Common myeloid progenitor, CD34-positive (primary cell): ENCODE measurements at regions of chr19 and their contacts with region 1.

Region 1: GRCh38 chr19:4815426-4816201 is 15.9 kb downstream of the TICAM1 start:
- DNase-seq: peak; percentile 81 to 84 (median 83)
- H3K4me3 ChIP-seq: peak overlapping the region; percentile 5 to 81 (median 49)
- H3K27ac ChIP-seq: no peak overlapping the region
- H3K4me1 ChIP-seq: peaks cover 0 to 13% (median 10%) of the 10 kb centered on the region in 4 experiments
- H3K27me3 ChIP-seq: no peaks in the 10 kb centered on the region

Region 2: DNA sequence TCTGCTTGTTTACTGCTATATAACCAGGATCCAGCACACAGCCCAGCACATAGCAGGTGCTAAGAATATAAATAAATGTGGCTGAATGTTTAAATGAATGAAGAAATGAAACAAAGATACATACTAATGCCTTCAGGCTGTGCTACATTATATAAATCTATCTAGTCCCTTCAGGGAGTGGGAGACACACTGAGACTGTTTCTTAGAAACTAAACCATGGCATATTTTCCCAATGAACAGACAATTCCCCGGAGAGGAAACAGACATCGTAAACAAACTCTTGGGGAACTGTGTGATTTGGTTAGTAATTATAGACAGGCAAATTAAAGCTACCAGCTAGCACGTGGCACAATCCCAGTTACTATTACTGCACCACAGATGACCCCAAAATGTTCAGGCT is 33.8 kb before region 1 on chr19:
- CTCF ChIA-PET with region 1: no interaction called
- POLR2A ChIA-PET with region 1: no interaction called
- DNase-seq: no peak
- H3K4me3 ChIP-seq: no peak overlapping the region
- H3K27ac ChIP-seq: no peak overlapping the region
- H3K4me1 ChIP-seq: peaks cover 0 to 3% (median 0%) of the 10 kb centered on the region in 4 experiments
- H3K27me3 ChIP-seq: peaks cover 0 to 24% (median 2%) of the 10 kb centered on the region in 5 experiments

Region 3: DNA sequence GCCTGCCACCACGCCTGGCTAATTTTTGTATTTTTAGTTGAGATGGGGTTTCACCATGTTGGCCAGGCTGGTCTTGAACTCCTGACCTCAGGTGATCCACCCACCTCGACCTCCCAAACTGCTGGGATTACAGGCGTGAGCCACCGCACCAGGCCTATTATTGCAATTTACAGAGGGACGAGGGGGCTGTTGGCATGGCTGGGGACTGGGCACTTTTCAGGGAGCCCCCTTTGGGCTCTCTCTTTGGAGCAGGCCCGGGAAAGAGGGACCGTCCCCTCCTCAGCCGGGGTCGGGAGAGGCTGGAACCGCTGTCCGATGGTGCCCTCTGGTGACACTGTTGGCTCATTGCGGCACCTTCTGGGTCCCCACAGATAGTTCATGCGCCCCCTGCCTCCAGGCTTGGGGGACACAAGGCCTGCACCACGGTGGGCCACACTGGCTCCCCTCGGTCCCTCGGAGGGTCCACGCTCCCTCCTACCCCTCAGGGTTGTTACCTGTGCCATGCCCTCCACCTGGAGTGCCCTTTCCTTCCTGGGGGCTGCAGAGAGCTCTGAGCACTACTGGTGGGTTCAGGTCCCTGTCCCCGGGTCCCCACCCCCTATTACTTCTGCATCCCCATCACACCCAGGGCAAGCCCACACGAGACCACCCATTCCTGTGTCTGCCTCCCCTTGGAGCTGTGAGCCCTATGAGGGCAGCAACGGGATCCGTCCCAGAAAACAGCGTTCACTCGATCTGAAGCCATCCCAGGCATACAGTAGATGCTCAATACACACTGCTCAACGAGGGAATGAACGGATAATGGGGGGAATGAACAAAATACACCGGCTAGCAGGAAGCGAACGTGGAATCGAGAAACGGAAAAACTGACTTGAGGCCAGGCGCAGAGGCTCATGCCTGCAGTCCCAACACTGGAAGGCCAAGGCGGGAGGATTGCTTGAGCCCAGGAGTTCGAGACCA is 11.6 kb before region 1 on chr19:
- CTCF ChIA-PET with region 1: interaction called, 10 read pairs
- POLR2A ChIA-PET with region 1: interaction called, 4 read pairs
- DNase-seq: peak; percentile 76 to 83 (median 79)
- H3K4me3 ChIP-seq: peak overlapping the region in 1 of 7 experiments; percentile 8
- H3K27ac ChIP-seq: no peak overlapping the region
- H3K4me1 ChIP-seq: peaks cover 0 to 20% (median 3%) of the 10 kb centered on the region in 4 experiments
- H3K27me3 ChIP-seq: no peaks in the 10 kb centered on the region

Region 4: GRCh38 chr19:4831304-4831978 is 15.8 kb after region 1 on chr19 and contains the start of gene TICAM1:
- CTCF ChIA-PET with region 1: interaction called, 73 read pairs
- POLR2A ChIA-PET with region 1: interaction called, 4 read pairs
- DNase-seq: peak; percentile 78 to 88 (median 88)
- H3K4me3 ChIP-seq: peak within 1 kb of the TSS; percentile 64 to 96 (median 88)
- H3K27ac ChIP-seq: peak within 1 kb of the TSS in 1 of 2 experiments; percentile 79
- H3K4me1 ChIP-seq: peaks cover 0 to 19% (median 14%) of the 10 kb centered on the region in 4 experiments
- H3K27me3 ChIP-seq: no peaks in the 10 kb centered on the region

Region 5: GRCh38 chr19:4844348-4845179 is 28.9 kb after region 1 on chr19:
- CTCF ChIA-PET with region 1: interaction called, 102 read pairs
- POLR2A ChIA-PET with region 1: interaction called, 4 read pairs
- DNase-seq: no peak
- H3K4me3 ChIP-seq: no peak overlapping the region
- H3K27ac ChIP-seq: no peak overlapping the region
- H3K4me1 ChIP-seq: peaks cover 0 to 9% (median 4%) of the 10 kb centered on the region in 4 experiments
- H3K27me3 ChIP-seq: no peaks in the 10 kb centered on the region

Region 6: GRCh38 chr19:4851551-4852290 is 36.1 kb after region 1 on chr19:
- CTCF ChIA-PET with region 1: interaction called, 102 read pairs
- POLR2A ChIA-PET with region 1: interaction called, 4 read pairs
- DNase-seq: peak; percentile 55 to 75 (median 65)
- H3K4me3 ChIP-seq: no peak overlapping the region
- H3K27ac ChIP-seq: no peak overlapping the region
- H3K4me1 ChIP-seq: no peaks in the 10 kb centered on the region
- H3K27me3 ChIP-seq: no peaks in the 10 kb centered on the region

Region 7: DNA sequence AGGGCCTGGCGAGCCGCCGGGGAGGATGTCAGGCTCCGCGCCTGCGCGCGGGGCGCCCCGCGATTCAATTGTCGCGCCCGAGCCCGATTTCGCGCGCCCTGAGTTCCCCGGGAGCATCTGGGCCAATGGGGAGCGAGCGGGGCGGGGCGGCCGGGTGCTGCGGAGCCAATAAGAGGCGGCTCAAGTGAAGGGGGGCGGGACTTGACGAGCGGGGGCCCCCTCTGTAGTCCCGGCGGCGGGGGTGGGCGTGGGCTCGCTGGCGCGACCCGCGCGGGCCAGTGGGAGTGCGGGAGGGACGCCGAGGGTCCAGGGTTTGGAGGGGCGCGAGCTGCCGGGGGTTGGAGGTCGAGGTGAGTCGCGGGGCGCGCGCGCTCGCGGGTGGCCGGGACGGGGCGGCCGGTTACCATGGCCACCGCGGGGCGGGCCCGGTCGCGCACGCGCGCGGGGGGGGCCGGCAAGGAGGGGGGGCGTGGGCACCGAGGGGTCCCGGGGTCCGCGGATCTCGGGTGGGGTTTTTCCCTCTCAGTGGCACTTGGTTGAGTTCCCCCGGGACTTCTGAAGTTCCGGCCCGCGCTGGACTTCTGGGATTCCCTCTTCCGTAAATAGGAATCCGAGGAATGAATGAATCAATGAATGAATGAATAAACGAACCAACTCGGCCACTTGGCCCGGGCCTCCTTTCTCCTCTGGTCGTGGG is 94.4 kb after region 1 on chr19:
- CTCF ChIA-PET with region 1: interaction called, 33 read pairs
- POLR2A ChIA-PET with region 1: no interaction called
- DNase-seq: peak; percentile 86 to 93 (median 91)
- H3K4me3 ChIP-seq: peak overlapping the region; percentile 33 to 85 (median 71)
- H3K27ac ChIP-seq: no peak overlapping the region
- H3K4me1 ChIP-seq: peaks cover 14 to 56% (median 46%) of the 10 kb centered on the region in 4 experiments
- H3K27me3 ChIP-seq: no peaks in the 10 kb centered on the region

Region 8: DNA sequence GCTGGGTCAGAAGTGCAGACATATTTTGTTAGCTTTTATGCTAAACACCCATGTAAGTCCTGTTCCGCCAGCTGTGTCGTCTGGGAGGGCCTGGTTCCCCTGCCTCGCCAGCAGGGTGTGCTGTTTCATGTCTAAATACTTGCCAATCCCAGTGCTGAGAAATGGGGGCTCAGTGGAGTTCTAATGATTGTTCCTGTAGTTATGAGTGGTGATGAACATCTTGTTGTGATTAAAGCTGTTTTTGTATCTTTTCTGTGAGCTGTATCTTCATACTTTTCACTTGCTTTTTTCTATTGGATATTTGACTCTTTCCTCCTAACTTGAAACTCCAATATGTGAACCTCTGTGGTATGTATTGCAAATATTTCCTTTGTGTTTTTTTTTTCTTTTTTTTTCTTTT is 186.0 kb after region 1 on chr19:
- CTCF ChIA-PET with region 1: no interaction called
- POLR2A ChIA-PET with region 1: no interaction called
- DNase-seq: peak; percentile 51 to 73 (median 70)
- H3K4me3 ChIP-seq: no peak overlapping the region
- H3K27ac ChIP-seq: no peak overlapping the region
- H3K4me1 ChIP-seq: peaks cover 0 to 2% (median under 1%) of the 10 kb centered on the region in 4 experiments
- H3K27me3 ChIP-seq: no peaks in the 10 kb centered on the region

Region 9: GRCh38 chr19:5031231-5032100 is 215.9 kb after region 1 on chr19:
- CTCF ChIA-PET with region 1: interaction called, 42 read pairs
- POLR2A ChIA-PET with region 1: no interaction called
- DNase-seq: peak; percentile 71 to 78 (median 71)
- H3K4me3 ChIP-seq: no peak overlapping the region
- H3K27ac ChIP-seq: no peak overlapping the region
- H3K4me1 ChIP-seq: peaks cover 0 to 7% (median 5%) of the 10 kb centered on the region in 4 experiments
- H3K27me3 ChIP-seq: no peaks in the 10 kb centered on the region